ENCODE measurements at regions of chr4 and their contacts with region 1.

Region 1: GRCh38 chr4:3489451-3489962 is 26.4 kb downstream of the DOK7 start:
- DNase-seq: no peak
- H3K4me3 ChIP-seq: no peak overlapping the region
- H3K27ac ChIP-seq: peak overlapping the region in 1 of 2 donors; percentile 27
- H3K4me1 ChIP-seq: peaks cover 4 to 7% of the 10 kb centered on the region in 2 donors
- H3K27me3 ChIP-seq: no peaks in the 10 kb centered on the region
- CTCF ChIP-seq: no peak

Region 2: GRCh38 chr4:3248811-3249661 is 240.5 kb before region 1 on chr4 and contains the start of gene MSANTD1:
- intact Hi-C with region 1: no loop called
- DNase-seq: no peak
- H3K4me3 ChIP-seq: no peak within 1 kb of the TSS
- H3K27ac ChIP-seq: no peak within 1 kb of the TSS
- H3K4me1 ChIP-seq: no peaks in the 10 kb centered on the region
- H3K27me3 ChIP-seq: no peaks in the 10 kb centered on the region
- CTCF ChIP-seq: no peak
- total RNA-seq, gene MSANTD1: not detected

Region 3: DNA sequence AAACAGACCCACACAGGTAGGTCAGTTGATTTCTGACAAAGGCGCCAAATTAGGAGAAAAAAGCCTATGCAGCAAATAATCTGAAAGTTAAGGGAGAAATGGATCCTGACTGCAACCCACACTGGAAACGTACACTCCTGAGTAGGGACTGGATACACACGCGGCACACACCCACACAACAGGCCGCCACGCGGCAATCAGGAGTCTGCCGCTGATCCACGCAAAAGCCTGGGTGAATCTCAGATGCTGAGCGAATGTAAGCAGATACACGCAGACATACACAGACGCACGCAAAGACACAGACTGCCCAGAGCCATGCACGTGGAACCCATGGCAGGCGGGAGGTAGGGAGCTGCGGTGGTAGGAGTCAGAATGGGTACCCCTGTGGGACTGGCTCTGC is 21.0 kb after region 1 on chr4:
- intact Hi-C with region 1: loop called (anchors 2 kb)
- DNase-seq: no peak
- H3K4me3 ChIP-seq: no peak overlapping the region
- H3K27ac ChIP-seq: no peak overlapping the region
- H3K4me1 ChIP-seq: no peaks in the 10 kb centered on the region
- H3K27me3 ChIP-seq: no peaks in the 10 kb centered on the region
- CTCF ChIP-seq: no peak